Breast epithelium (tissue), 4 donors: ENCODE measurements at regions of chr14 and their contacts with region 1.

Region 1: DNA sequence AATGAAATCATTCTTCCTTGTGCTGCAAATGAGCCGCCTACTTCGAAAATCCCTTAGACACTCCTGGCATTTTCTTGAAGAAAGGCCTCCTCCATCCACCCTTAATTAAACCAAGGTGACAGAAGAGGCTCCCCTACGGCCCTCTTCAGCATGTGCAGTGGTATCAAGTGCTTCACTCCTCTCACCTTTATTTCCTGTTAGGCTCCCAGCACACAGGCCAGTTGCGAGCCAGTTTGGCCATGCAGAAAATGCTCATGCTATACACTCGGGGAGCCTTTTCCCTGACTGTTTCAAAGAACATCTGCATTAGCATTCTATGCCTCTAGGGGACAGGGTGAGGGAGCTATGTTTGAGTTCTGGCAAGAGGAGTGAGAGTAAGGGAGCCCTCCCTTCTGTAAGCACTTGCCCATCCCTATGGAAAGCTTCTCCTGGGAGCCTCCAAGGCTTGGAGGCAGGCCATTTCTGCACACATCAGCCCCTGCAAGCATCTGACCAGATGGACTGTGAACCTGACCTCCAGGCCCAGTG is 291.5 kb downstream of the RPS29 start:
- DNase-seq: no peak
- H3K4me3 ChIP-seq: no peak overlapping the region
- H3K27ac ChIP-seq: no peak overlapping the region
- H3K4me1 ChIP-seq: no peaks in the 10 kb centered on the region
- H3K27me3 ChIP-seq: no peaks in the 10 kb centered on the region
- CTCF ChIP-seq: no peak
- POLR2A ChIP-seq: no peak

Region 2: GRCh38 chr14:49052521-49052920 is 242.2 kb before region 1 on chr14:
- intact Hi-C with region 1: no loop called
- DNase-seq: no peak
- H3K4me3 ChIP-seq: no peak overlapping the region
- H3K27ac ChIP-seq: no peak overlapping the region
- H3K4me1 ChIP-seq: no peaks in the 10 kb centered on the region
- H3K27me3 ChIP-seq: no peaks in the 10 kb centered on the region
- CTCF ChIP-seq: no peak
- POLR2A ChIP-seq: no peak

Region 3: DNA sequence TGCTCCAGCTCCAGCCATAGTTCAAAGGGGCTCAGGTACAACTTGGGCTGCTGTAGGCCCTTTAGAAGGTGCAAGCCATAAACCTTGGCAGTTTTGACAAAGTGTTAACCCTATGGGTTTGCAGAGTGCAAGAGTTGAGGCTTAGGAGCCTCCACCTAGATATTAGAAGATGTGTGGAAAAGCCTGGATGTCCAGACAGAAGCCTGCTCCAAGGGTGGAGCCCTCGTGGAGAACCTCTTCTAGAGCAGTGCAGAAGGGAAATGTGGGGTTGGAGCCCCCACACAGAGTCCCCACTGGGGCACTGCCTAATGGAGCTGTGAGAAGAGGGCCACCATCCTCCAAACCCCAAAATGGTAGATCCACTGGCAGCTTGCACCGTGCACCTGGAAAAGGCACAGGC is 246.4 kb after region 1 on chr14:
- intact Hi-C with region 1: loop called (anchors 5 kb)
- DNase-seq: no peak
- H3K4me3 ChIP-seq: no peak overlapping the region
- H3K27ac ChIP-seq: no peak overlapping the region
- H3K4me1 ChIP-seq: no peaks in the 10 kb centered on the region
- H3K27me3 ChIP-seq: no peaks in the 10 kb centered on the region
- CTCF ChIP-seq: no peak
- POLR2A ChIP-seq: no peak